Aorta (tissue), 5 donors: ENCODE measurements at regions of chr6 and their contacts with region 1.

Region 1: DNA sequence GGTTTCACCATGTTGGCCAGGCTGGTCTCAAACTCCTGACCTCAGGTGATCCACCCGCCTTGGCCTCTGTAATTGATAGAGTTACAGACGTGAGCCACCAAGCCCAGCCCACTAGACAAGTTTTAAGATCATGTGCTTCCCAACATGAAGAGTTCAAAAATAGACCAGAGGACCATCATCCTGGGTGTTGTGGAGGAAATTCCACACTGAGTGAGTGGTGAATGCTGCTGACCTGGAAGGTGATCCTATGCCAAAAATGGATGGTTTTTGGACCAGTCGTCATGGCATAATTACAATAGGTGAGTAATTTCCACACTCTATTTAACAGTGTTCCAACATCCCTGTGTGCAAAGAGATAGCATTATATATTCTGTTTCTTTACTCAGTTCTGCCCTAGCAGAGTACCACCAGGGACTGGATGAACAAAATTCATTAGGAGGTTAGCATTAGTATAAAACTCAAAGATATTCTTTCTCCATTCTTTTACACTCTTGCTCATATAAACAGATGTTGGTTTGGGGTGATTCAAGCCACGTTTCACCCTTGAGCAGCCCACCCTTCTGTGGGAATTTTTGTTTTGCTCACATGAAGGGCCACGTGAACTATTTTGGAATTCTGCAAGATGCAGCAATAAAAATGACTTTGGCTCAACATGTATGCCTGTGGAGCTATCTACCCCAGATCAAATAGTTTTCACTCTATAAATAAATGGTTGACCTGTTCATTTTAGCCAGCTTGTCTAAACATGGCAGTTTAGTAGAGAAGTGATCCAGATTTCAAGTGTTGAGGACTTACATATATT is 206.2 kb upstream of the TCF21 start:
- DNase-seq: no peak
- ATAC-seq: no peak
- H3K4me3 ChIP-seq: no peak overlapping the region
- H3K27ac ChIP-seq: no peak overlapping the region
- H3K4me1 ChIP-seq: no peaks in the 10 kb centered on the region
- H3K27me3 ChIP-seq: no peaks in the 10 kb centered on the region

Region 2: GRCh38 chr6:133748628-133749027 is 65.9 kb after region 1 on chr6:
- intact Hi-C with region 1: no loop called
- DNase-seq: no peak
- ATAC-seq: no peak
- H3K4me3 ChIP-seq: no peak overlapping the region
- H3K27ac ChIP-seq: no peak overlapping the region
- H3K4me1 ChIP-seq: no peaks in the 10 kb centered on the region
- H3K27me3 ChIP-seq: no peaks in the 10 kb centered on the region

Region 3: GRCh38 chr6:133816171-133816570 is 133.5 kb after region 1 on chr6:
- intact Hi-C with region 1: loop called in 1 of 2 experiments (anchors 1 kb)
- DNase-seq: no peak
- ATAC-seq: no peak
- H3K4me3 ChIP-seq: no peak overlapping the region
- H3K27ac ChIP-seq: no peak overlapping the region
- H3K4me1 ChIP-seq: peaks cover 5% of the 10 kb centered on the region in 2 donors
- H3K27me3 ChIP-seq: no peaks in the 10 kb centered on the region